ENCODE measurements at regions of chr19 and their contacts with region 1.

Region 1: DNA sequence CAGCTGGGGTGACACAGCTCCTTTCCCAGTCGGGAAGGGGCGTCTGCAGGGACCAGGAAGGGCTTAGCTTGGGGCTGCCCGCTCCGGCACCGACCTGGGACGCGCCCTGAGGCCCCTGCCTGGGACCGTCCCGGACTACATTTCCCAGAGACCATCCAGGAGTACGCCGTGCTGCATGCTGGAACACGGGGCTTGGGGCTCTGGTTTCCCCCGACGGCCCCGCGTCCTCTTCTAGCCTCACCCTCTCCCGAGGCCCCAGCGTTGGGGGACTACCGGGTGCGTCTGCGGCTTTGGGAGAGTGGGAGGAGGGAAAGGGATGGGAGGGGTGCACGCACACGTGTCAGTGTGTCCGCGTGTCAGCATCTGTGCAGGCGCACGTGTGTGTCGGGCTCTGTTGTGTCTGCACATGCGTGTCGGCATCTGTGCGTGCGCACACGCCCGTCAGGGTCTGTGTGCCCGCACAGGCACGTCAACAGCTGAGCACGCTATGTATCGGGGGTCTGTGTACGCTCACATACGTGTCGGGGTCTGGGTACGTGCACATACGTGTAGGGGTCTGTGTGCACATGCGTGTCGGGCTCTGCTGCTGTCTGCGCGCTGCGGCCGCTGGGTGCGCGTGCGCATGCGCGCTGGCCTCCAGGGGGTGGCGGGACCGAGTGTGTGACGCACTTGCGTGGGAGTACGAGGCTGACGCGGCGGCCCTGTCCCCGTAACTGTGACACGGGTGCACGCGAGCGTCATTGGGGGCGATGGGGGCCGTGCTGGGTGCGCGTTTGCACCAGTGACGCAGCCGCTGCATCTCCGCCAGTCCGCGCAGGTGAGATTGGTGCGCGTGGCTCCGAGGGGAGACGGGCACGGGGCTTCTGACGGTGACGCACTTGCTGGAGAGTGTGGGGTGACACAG is at the start of gene ZNF331:
- DNase-seq: peak; percentile 88
- H3K4me3 Mint-ChIP-seq: peak within 1 kb of the TSS; percentile 94
- H3K27ac Mint-ChIP-seq: peak within 1 kb of the TSS; percentile 92
- H3K4me1 Mint-ChIP-seq: peaks cover 22% of the 10 kb centered on the region
- H3K27me3 Mint-ChIP-seq: no peaks in the 10 kb centered on the region
- total RNA-seq, gene ZNF331: 35.5 to 36.9 TPM

Region 2: DNA sequence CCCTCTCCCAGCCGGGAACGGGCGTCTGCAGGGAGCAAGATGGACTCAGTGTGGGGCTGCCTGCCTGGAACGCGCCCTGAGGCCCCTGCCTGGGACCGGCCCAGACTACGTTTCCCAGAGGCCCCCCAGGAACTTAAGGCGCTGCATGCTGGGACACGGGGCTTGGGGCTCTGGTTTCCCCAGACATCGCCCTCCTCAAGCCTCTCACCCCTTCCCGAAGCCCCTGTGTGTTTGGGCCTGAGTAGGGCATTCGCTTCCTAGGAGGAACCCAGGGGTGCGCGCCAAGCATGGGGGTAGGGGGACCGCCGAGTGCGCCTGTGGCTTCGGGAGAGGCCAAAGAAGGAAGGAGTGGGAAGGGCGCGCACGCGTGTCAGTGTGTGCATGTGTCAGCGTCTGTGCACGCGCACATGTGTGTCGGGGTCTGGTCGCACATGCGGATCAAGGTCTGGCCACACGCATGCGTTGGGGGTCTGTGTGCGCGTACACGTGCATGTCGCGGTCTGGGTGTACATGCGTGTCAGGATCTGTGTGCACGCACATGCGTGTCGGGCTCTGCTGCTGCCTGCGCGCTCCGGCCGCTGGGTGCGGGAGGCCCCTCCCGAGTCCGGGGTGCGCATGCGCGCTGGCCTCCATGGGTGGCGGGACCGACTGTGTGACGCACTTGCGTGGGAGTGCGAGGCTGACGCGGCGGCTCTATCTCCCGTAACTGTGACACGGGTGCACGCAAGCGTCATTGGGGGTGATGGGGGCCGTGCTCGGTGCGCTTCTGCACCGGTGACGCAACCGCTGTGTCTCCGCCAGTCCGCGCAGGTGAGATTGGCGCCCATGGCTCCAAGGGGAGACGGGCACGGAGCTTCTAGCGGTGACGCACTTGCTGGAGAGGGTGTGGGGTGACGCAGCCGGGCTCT is 16.4 kb after region 1 on chr19:
- CTCF ChIA-PET with region 1: interaction called, 3 read pairs
- intact Hi-C with region 1: loop called (anchors 1 kb)
- DNase-seq: peak; percentile 94
- H3K4me3 Mint-ChIP-seq: peak overlapping the region; percentile 94
- H3K27ac Mint-ChIP-seq: peak overlapping the region; percentile 99
- H3K4me1 Mint-ChIP-seq: peaks cover 31% of the 10 kb centered on the region
- H3K27me3 Mint-ChIP-seq: no peaks in the 10 kb centered on the region

Measured in activated naive CD4-positive, alpha-beta T cell treated with anti-CD3 and anti-CD28 coated beads for 36 hours (primary cell).